Spleen (tissue), 13 donors: ENCODE measurements at regions of chr9 and their contacts with region 1.

Region 1: GRCh38 chr9:132354637-132355355 is at the start of gene SETX:
- DNase-seq: peak; percentile 99
- H3K4me3 ChIP-seq: peak within 1 kb of the TSS; percentile 74 to 97 (median 90)
- H3K27ac ChIP-seq: peak within 1 kb of the TSS; percentile 92 to 100 (median 98)
- H3K4me1 ChIP-seq: peaks cover 34 to 52% (median 48%) of the 10 kb centered on the region in 6 donors
- H3K27me3 ChIP-seq: no peaks in the 10 kb centered on the region
- CTCF ChIP-seq: peak in 7 of 11 experiments; percentile 16 to 56 (median 34)
- POLR2A ChIP-seq: peak; percentile 89 to 96 (median 94)
- total RNA-seq, gene SETX: 88.0 to 154 (median 113) TPM

Region 2: DNA sequence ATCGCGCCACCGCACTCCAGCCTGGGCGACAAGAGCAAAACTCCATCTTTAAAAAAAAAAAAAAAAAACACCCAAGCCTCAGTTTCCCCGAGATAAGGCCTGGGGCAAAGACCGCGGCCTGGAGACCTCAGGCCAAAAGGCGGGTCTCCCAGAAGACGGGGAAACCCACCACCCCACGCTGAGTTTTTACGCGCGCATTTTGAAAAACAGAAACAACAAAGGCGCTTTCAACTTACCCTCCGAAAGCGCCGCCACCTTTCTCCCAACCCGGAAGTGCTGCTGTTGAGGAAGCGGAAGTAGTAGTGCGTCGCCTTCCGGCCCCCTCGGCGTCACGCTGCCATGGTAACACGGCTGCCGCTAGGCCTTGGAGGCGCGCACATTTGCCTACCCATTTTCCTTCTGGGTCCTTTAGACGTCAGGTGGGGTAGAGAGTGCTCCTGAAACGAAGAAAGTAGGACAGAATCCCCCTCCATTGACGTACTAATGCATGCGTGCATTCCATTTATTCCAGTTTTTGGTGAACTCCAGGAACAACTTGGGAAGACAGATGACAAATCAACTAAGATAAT is 51.8 kb after region 1 on chr9 and contains the start of gene TTF1:
- intact Hi-C with region 1: loop called (anchors 10 kb)
- DNase-seq: peak; percentile 97
- H3K4me3 ChIP-seq: peak within 1 kb of the TSS; percentile 82 to 98 (median 87)
- H3K27ac ChIP-seq: peak within 1 kb of the TSS in 6 of 8 donors; percentile 43 to 83 (median 75)
- H3K4me1 ChIP-seq: peaks cover 45 to 71% (median 63%) of the 10 kb centered on the region in 6 donors
- H3K27me3 ChIP-seq: peaks cover 0 to 26% (median 19%) of the 10 kb centered on the region in 7 donors
- CTCF ChIP-seq: no peak
- POLR2A ChIP-seq: peak in 2 of 3 donors; percentile 22 to 26
- total RNA-seq, gene TTF1: 12.1 to 18.5 (median 14.6) TPM